ENCODE measurements at regions of chr14 and their contacts with region 1.

Region 1: DNA sequence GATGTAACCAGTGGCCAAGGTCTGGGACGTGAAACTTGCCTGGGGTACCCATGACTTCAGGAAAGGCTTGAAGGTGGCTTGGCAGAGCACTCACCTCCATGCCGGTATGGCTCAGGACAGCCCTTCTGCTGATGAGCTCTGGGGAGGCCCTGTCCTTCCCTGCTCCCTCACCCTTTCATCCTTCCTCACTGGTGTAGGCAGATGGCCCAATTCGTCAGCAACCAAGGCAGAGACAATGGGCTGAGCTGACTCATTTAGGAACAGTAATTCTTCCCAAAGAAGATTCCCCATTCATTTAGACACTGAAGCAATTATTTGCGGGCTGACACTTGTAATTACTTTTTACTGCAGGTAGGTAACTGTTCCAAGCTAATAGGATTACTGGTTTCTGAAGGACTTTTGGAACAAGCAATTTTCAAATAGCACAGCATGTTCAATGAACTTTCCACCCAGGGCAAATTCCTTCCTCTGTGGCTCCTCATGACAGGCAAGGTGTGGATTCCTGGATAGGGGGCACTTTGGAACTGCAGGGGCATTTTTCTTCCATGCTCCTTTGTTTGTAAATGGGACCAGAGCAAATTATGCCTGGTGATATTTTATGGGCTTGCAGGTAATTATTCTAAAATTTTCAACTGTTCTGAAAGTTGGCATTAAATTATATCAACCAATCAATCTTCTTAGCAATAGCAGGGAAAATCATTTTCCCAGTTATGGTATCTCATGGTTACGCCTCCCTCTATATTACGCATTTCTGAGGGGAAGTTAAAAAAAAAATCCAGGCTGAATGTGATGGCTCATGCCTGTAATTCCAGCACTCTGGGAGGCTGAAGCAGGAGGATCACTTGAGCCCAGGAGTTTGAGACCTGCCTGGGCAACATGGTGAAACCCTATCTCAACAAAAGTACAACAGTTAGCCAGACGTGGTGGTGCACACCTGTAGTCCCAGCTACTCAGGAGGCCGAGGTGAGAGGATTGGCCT is 24.1 kb upstream of the NRDE2 start:
- DNase-seq: no peak
- H3K4me3 ChIP-seq: no peak overlapping the region
- H3K27ac ChIP-seq: no peak overlapping the region
- H3K4me1 ChIP-seq: no peaks in the 10 kb centered on the region
- H3K27me3 ChIP-seq: no peaks in the 10 kb centered on the region
- CTCF ChIP-seq: no peak
- POLR2A ChIP-seq: no peak

Region 2: DNA sequence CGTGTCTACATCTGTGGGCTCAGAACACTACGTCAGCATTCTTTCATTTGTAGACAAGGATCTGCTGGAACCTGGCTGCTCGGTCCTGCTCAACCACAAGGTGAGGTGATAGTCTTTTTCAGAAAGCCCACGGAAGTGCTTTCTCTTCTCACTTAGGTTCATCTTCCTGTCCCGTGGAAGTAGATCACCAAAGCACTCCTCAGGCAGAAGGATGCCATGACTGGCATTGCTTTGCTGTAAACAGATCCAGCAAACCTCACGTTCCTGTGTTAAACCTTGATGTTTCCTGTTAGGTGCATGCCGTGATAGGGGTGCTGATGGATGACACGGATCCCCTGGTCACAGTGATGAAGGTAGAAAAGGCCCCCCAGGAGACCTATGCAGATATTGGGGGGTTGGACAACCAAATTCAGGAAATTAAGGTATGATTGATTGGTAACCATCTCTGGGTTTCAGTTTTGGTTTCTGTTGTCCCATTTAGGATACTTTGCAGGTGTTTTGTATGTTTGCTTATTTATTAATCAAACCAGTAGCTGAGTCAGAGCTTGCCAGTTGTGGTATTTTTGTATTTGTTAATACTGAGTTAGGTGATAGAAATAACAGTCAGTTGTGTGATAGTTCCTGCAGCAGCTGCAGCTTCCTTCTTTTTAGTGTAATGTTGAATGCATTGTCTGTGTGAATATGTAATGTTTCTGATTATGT is 91.9 kb before region 1 on chr14:
- intact Hi-C with region 1: no loop called
- DNase-seq: no peak
- H3K4me3 ChIP-seq: no peak overlapping the region
- H3K27ac ChIP-seq: no peak overlapping the region
- H3K4me1 ChIP-seq: no peaks in the 10 kb centered on the region
- H3K27me3 ChIP-seq: no peaks in the 10 kb centered on the region
- CTCF ChIP-seq: no peak
- POLR2A ChIP-seq: no peak

Region 3: GRCh38 chr14:91377700-91378652 is 1022.1 kb after region 1 on chr14:
- intact Hi-C with region 1: loop called (anchors 5 kb)
- DNase-seq: no peak
- H3K4me3 ChIP-seq: no peak overlapping the region
- H3K27ac ChIP-seq: peak overlapping the region in 1 of 2 donors; percentile 19
- H3K4me1 ChIP-seq: no peaks in the 10 kb centered on the region
- H3K27me3 ChIP-seq: no peaks in the 10 kb centered on the region
- CTCF ChIP-seq: no peak
- POLR2A ChIP-seq: no peak